Activated CD4-positive, alpha-beta memory T cell treated with anti-CD3 and anti-CD28 coated beads, Interleukin-2, amount 10 ng/mL, durations not matched to agents 7 days and 5 days (primary cell): ENCODE measurements at regions of chr6 and their contacts with region 1.

Region 1: DNA sequence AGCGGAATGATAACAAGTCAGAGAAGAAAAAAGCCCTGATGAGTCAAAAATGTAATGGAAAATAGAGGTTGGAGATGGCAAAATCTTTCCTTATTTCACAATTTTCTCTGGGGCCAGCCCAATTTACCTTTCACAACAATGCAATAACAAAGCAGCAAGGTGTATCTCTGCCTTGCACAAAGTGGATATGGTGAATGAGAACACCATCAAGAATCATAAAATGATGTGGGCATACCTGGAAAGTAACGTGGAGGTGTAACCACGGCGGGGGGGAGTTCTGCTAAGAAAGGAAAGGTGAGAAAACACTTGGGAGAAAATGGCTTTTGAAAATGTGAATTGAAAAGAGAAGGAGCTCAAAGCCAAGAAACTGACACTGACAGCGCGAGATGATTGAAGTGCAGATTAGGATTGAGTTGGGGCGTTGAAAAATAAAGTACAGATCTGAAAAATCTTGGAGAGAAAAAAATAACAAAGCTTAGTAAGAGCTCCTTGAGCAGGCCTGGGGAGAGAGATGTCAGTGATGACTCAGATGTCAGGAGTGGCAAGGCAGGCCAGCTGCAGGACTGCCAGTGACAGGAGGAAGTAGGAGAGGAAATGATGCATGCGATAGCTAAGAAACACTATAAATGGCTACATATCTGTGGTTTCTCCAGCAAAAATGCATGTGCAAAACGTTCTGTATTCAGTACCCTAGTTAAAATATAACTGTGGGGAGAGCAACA is 26.2 kb downstream of the ARHGAP18 start:
- DNase-seq: peak; percentile 75
- H3K4me3 Mint-ChIP-seq: peak overlapping the region; percentile 36
- H3K27ac Mint-ChIP-seq: peak overlapping the region; percentile 83
- H3K4me1 Mint-ChIP-seq: peaks cover 64% of the 10 kb centered on the region
- H3K27me3 Mint-ChIP-seq: no peaks in the 10 kb centered on the region

Region 2: DNA sequence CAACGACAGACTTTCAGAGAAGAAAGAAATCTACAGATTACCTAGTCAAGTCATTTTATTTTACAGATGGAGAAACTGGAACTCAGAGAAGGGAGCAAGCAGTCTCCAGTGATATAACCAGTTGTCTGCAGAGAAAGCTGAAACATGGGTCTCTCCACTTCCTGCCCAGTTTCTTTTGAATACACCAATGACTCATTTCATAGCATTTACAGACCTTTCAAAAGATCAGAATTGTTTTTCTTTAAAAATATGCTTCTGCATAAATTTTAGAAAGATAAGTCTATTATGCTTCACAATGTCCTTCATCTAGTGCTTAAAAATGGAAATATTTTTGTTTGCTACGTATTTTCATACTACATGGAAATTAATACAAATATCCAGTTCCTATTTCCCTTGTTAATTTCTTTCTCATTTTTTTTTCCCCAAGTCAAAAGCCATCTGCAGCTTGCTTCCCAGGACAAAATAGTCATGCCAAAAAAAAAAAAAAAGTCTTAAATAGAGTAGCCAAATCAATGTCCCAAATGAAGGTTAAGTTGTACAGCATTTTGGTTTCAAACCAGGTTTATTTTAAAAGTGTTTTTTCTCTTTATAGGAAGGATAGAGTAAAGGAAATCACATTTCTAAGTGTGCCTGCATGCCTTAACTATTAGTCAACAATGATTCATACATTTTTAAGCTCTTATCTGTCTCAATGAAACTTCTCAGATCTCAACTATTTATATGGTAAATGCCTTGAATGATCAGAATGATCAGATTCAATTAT is 10.7 kb before region 1 on chr6:
- CTCF ChIA-PET with region 1: interaction called, 29 read pairs
- POLR2A ChIA-PET with region 1: interaction called, 24 read pairs
- DNase-seq: peak; percentile 34
- H3K4me3 Mint-ChIP-seq: peak overlapping the region; percentile 68
- H3K27ac Mint-ChIP-seq: peak overlapping the region; percentile 92
- H3K4me1 Mint-ChIP-seq: peaks cover 63% of the 10 kb centered on the region
- H3K27me3 Mint-ChIP-seq: no peaks in the 10 kb centered on the region

Region 3: GRCh38 chr6:129695373-129696027 is 11.7 kb after region 1 on chr6:
- CTCF ChIA-PET with region 1: interaction called, 5 read pairs
- POLR2A ChIA-PET with region 1: interaction called, 15 read pairs
- DNase-seq: peak; percentile 42
- H3K4me3 Mint-ChIP-seq: peak overlapping the region; percentile 12
- H3K27ac Mint-ChIP-seq: peak overlapping the region; percentile 18
- H3K4me1 Mint-ChIP-seq: peaks cover 41% of the 10 kb centered on the region
- H3K27me3 Mint-ChIP-seq: peaks cover 5% of the 10 kb centered on the region